CD4-positive, alpha-beta memory T cell (primary cell): ENCODE measurements at regions of chr15 and their contacts with region 1.

Region 1: DNA sequence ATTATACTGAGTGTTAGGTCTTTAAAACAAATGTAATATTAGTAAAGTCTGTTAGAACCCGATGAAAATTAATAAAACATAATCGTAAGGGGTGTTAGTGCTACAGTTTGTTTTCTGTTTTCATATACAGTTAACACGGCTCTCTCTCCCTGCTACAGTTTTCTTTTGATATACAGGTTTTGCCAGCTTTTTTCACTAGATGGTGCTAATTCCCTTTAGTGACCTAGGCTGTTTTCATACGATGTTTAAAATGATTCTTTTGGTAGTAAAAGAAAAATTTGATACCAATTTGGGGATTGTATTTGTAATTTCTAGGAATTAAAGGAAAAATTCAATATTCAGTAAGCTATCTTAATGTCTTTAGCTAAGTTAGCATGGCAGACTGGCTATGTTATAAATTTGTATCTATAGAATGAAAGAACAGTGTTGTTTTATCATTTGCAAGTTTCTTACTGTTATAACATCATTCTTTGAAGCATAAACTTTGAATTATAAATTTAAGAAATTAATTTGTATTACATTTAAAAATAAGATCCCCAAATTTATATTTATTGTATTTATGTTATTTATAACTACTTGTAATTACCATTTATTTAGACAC is 11.5 kb downstream of the APH1B start:
- DNase-seq: peak in 4 of 5 donors; percentile 45 to 55 (median 48)
- H3K4me3 ChIP-seq: no peak overlapping the region
- H3K4me3 Mint-ChIP-seq: no peak overlapping the region
- H3K27ac ChIP-seq: no peak overlapping the region
- H3K27ac Mint-ChIP-seq: peak overlapping the region in 6 of 7 donors; percentile 1 to 81 (median 34)
- H3K4me1 ChIP-seq: peaks cover 7% of the 10 kb centered on the region
- H3K4me1 Mint-ChIP-seq: peaks cover 6 to 8% (median 7%) of the 10 kb centered on the region in 4 donors
- H3K27me3 ChIP-seq: no peaks in the 10 kb centered on the region
- H3K27me3 Mint-ChIP-seq: no peaks in the 10 kb centered on the region

Region 2: GRCh38 chr15:63374686-63375520 is 86.0 kb after region 1 on chr15:
- CTCF ChIA-PET with region 1: no interaction called
- POLR2A ChIA-PET with region 1: no interaction called
- intact Hi-C with region 1: no loop called
- DNase-seq: no peak
- H3K4me3 ChIP-seq: no peak overlapping the region
- H3K4me3 Mint-ChIP-seq: no peak overlapping the region
- H3K27ac ChIP-seq: no peak overlapping the region
- H3K27ac Mint-ChIP-seq: peak overlapping the region in 2 of 7 donors; percentile 34 to 67
- H3K4me1 ChIP-seq: no peaks in the 10 kb centered on the region
- H3K4me1 Mint-ChIP-seq: peaks cover 5 to 10% (median 6%) of the 10 kb centered on the region in 4 donors
- H3K27me3 ChIP-seq: no peaks in the 10 kb centered on the region
- H3K27me3 Mint-ChIP-seq: peaks cover 16 to 27% of the 10 kb centered on the region in 2 donors

Region 3: GRCh38 chr15:63402498-63403253 is 113.8 kb after region 1 on chr15:
- CTCF ChIA-PET with region 1: interaction called, 29 read pairs
- POLR2A ChIA-PET with region 1: no interaction called
- intact Hi-C with region 1: loop called (anchors 1 kb)
- DNase-seq: peak in 4 of 5 donors; percentile 34 to 44 (median 40)
- H3K4me3 ChIP-seq: no peak overlapping the region
- H3K4me3 Mint-ChIP-seq: no peak overlapping the region
- H3K27ac ChIP-seq: no peak overlapping the region
- H3K27ac Mint-ChIP-seq: no peak overlapping the region
- H3K4me1 ChIP-seq: no peaks in the 10 kb centered on the region
- H3K4me1 Mint-ChIP-seq: peaks cover 0 to 4% (median 2%) of the 10 kb centered on the region in 4 donors
- H3K27me3 ChIP-seq: no peaks in the 10 kb centered on the region
- H3K27me3 Mint-ChIP-seq: peaks cover 3 to 8% of the 10 kb centered on the region in 2 donors

Region 4: DNA sequence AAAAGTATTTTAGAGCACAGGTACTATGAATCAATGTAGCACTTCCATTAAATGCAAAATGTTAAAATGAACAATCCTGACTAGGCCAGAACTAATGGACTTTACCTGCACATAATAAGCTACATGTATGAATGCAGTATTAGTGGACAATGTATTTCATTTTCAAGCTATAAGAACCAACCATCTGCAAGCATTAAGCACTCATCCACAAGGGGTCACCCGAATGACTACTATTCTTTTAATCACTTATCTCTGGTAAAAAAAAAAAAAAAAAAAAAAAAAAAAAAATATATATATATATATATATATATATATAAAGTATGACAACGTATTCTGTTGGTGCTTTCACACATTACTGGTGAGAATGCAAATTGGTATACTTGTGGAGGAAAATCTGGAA is 537.6 kb after region 1 on chr15:
- CTCF ChIA-PET with region 1: no interaction called
- POLR2A ChIA-PET with region 1: no interaction called
- intact Hi-C with region 1: loop called (anchors 10 kb)
- DNase-seq: peak; percentile 34 to 49 (median 43)
- H3K4me3 ChIP-seq: no peak overlapping the region
- H3K4me3 Mint-ChIP-seq: peak overlapping the region in 4 of 8 donors; percentile 29 to 43 (median 40)
- H3K27ac ChIP-seq: no peak overlapping the region
- H3K27ac Mint-ChIP-seq: peak overlapping the region in 6 of 7 donors; percentile 36 to 85 (median 74)
- H3K4me1 ChIP-seq: peaks cover 75% of the 10 kb centered on the region
- H3K4me1 Mint-ChIP-seq: peaks cover 62 to 86% (median 74%) of the 10 kb centered on the region in 4 donors
- H3K27me3 ChIP-seq: no peaks in the 10 kb centered on the region
- H3K27me3 Mint-ChIP-seq: no peaks in the 10 kb centered on the region